K562 (cell line): ENCODE measurements at regions of chr9 and their contacts with region 1.

Region 1: GRCh38 chr9:19028835-19029451 is 4.1 kb downstream of the SAXO1 start:
- DNase-seq: peak; percentile 54 to 68 (median 58)
- ATAC-seq: peak; percentile 86
- H3K4me3 ChIP-seq: no peak overlapping the region
- H3K27ac ChIP-seq: no peak overlapping the region
- H3K4me1 ChIP-seq: peaks cover 0 to 7% of the 10 kb centered on the region in 2 experiments; a peak in 2 of 5 replicates
- H3K27me3 ChIP-seq: peaks cover 0 to 14% of the 10 kb centered on the region in 2 experiments; a peak in 2 of 5 replicates
- CTCF ChIP-seq: peak; percentile 53 to 70 (median 56)
- EP300 ChIP-seq: no peak
- POLR2A ChIP-seq: no peak
- RAD21 ChIP-seq: peak; percentile 56 to 65

Region 2: GRCh38 chr9:17802249-17802857 is 1226.6 kb before region 1 on chr9:
- CTCF ChIA-PET with region 1: no interaction called
- POLR2A ChIA-PET with region 1: no interaction called
- in situ Hi-C with region 1: loop called (anchors 10 kb)
- intact Hi-C with region 1: no loop called
- DNase-seq: no peak
- ATAC-seq: no peak
- H3K4me3 ChIP-seq: no peak overlapping the region
- H3K27ac ChIP-seq: no peak overlapping the region
- H3K4me1 ChIP-seq: no peaks in the 10 kb centered on the region
- H3K27me3 ChIP-seq: no peaks in the 10 kb centered on the region
- CTCF ChIP-seq: peak in 1 of 3 experiments; percentile 24; a peak in 2 of 6 replicates
- EP300 ChIP-seq: no peak
- POLR2A ChIP-seq: no peak
- RAD21 ChIP-seq: peak in 1 of 2 experiments; percentile 58; a peak in 3 of 4 replicates

Region 3: DNA sequence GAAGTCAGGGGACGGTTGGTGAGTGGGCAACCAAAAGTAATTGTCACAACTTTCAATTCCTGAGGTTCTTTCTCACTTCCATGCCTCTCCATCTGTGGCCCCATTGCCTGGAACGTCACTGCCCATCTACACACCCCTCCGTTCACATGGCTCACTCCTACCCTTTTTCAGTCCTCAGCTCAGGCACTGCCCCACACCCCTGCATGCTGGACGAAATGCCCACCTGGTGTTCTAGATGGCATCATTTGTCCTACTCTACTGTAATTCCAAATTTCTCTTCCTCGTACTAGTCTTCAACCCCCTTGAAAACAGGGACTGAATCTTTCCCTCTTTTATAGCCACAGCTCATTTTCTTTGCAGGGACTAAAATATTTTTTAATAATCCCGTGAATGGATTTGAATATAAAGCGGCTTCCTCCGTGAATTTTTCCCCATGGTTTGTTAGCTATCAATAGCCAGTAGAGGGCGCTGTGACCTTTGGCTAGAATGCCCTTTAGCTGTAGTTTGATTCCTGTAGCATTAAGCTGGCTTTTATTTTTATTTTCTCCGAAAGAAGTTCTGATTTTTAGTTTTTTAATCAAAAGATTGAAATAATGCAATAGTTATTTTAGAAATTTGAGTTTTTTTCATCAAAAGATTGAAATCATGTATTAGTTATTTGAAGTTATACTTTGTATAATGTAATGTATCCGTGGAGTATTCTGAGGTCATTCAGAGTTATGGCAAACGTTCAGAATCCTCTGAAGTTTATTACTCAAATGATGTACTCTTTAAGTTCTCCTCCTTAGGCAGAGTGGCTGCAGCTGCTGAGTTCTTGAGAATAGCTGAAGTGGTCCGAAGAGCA is 1218.0 kb before region 1 on chr9:
- CTCF ChIA-PET with region 1: no interaction called
- POLR2A ChIA-PET with region 1: no interaction called
- in situ Hi-C with region 1: loop called (anchors 10 kb)
- intact Hi-C with region 1: loop called (anchors 5 kb)
- DNase-seq: peak; percentile 15 to 50 (median 38)
- ATAC-seq: no peak
- H3K4me3 ChIP-seq: no peak overlapping the region
- H3K27ac ChIP-seq: no peak overlapping the region
- H3K4me1 ChIP-seq: no peaks in the 10 kb centered on the region
- H3K27me3 ChIP-seq: no peaks in the 10 kb centered on the region
- CTCF ChIP-seq: peak; percentile 37 to 67 (median 50); a peak in 4 of 6 replicates
- EP300 ChIP-seq: no peak
- POLR2A ChIP-seq: no peak
- RAD21 ChIP-seq: peak; percentile 54 to 65

Region 4: DNA sequence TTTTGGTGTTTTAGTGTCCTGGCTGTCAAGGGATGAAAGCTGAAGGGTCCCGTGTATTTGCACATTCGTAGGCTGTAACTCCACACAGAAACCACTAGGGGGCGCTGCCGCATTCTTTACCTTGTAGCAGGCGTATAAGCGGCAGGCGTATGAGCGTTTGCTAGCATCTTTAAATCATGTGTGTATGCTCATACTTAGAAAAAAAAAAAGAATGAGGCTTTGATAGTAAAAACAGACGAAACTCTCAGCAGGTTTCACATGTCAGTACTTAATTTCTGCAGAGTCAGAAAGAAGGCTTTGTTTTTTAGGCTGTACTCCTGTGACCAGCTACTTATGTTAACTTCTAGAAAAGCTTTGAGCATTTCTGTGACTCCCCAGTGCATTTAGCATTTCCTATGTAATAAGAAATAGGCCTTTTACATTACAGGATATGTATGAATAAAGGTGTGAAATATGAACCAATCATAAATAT is 773.7 kb before region 1 on chr9:
- CTCF ChIA-PET with region 1: no interaction called
- POLR2A ChIA-PET with region 1: no interaction called
- in situ Hi-C with region 1: loop called (anchors 10 kb)
- intact Hi-C with region 1: loop called (anchors 5 kb)
- DNase-seq: peak; percentile 39 to 68 (median 54)
- ATAC-seq: peak; percentile 80
- H3K4me3 ChIP-seq: no peak overlapping the region
- H3K27ac ChIP-seq: no peak overlapping the region
- H3K4me1 ChIP-seq: no peaks in the 10 kb centered on the region
- H3K27me3 ChIP-seq: no peaks in the 10 kb centered on the region
- CTCF ChIP-seq: peak; percentile 54 to 66 (median 64); a peak in 5 of 6 replicates
- EP300 ChIP-seq: no peak
- POLR2A ChIP-seq: no peak
- RAD21 ChIP-seq: peak; percentile 47 to 66

Region 5: GRCh38 chr9:18976221-18976708 is 52.7 kb before region 1 on chr9:
- CTCF ChIA-PET with region 1: no interaction called
- POLR2A ChIA-PET with region 1: no interaction called
- in situ Hi-C with region 1: no loop called
- intact Hi-C with region 1: no loop called
- DNase-seq: no peak
- ATAC-seq: no peak
- H3K4me3 ChIP-seq: no peak overlapping the region
- H3K27ac ChIP-seq: no peak overlapping the region
- H3K4me1 ChIP-seq: no peaks in the 10 kb centered on the region
- H3K27me3 ChIP-seq: no peaks in the 10 kb centered on the region
- CTCF ChIP-seq: no peak
- EP300 ChIP-seq: no peak
- POLR2A ChIP-seq: no peak
- RAD21 ChIP-seq: no peak